Mucosa of descending colon (tissue), 3 donors: ENCODE measurements at regions of chr9 and their contacts with region 1.

Region 1: GRCh38 chr9:92716557-92716956 is 46.6 kb upstream of the IPPK start:
- DNase-seq: peak; percentile 63 to 83 (median 82)
- ATAC-seq: peak; percentile 71
- H3K4me3 ChIP-seq: no peak overlapping the region
- H3K4me1 ChIP-seq: peaks cover 9% of the 10 kb centered on the region
- CTCF ChIP-seq: peak; percentile 73

Region 2: DNA sequence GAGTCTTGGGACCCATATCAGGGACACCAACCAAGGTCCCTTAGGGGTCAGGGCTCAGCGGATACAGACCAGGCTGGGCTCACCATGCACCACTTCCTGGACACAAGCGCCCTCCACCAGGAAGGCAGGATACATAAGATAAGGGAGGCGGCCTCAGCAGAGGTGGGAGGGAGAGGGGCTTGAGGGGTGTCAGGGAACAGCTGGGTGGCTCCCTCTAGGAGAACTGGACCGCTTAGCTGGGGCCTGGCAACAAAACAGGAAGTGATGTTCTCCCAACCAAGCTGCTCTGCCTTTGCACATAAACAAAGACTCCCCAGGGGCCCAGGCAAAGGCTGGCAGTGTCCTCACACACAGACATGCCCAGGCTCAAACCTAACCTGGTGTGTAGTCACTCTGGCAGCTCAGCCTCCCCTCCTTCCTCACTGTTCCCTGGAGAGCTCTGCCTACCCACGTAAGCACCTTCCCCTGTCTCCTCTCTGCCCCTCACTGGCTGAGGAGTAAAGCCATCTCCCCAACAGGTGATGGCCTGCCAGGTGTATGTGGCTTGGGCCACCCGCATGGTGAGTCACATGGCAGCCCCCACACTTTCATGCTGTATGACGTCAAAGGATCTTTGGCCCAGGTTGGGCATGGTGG is 53.9 kb after region 1 on chr9:
- intact Hi-C with region 1: no loop called
- DNase-seq: peak in 1 of 3 donors; percentile 14
- ATAC-seq: peak; percentile 40
- H3K4me3 ChIP-seq: no peak overlapping the region
- H3K4me1 ChIP-seq: peaks cover 12% of the 10 kb centered on the region
- CTCF ChIP-seq: no peak

Region 3: DNA sequence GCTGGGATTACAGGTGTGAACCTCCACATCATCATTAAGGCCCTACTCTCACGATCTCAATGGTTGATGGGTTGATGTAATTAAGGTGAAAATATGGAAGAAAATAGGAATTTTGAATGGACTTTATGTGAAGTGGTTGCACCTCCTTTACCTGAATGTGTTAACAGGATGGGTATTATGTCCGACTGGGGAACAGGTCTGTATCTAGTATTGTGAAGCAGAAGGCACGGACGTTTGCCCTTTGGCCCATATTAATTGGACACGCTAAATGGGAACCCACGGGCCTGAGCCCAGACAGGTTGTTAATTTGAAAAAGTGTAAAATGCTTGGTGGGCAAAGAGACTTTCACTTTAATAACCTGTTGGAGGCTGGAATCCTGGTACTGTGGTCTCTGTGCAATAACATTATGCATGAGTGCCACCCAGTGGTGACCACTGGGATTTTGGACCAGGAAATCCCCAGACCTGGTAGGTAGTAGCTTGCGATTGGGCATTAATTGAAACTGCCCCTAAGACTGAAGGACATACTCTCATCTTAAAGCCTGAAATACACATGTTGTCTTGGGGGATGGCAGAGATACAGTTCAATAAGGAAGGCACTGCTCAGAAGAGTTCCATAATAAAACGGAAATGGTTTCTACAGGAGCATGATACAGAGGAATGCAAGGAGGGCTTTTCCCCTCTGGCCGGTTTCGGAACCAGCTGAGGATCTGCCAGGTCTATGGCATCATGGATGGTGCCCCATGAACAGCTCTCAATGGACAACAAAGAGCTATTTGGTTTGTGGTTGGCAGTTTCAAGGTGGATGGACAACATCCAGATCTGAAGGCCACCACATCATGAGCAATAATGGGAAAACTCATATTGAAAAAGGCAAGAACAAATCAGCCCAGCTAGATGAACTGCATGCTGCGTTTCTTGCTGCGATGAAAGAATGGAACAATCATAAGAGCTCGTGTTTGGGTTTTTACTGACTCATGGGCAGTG is 74.3 kb after region 1 on chr9:
- intact Hi-C with region 1: loop called (anchors 5 kb)
- DNase-seq: peak in 2 of 3 donors; percentile 81 to 92
- ATAC-seq: peak; percentile 96
- H3K4me3 ChIP-seq: no peak overlapping the region
- H3K4me1 ChIP-seq: no peaks in the 10 kb centered on the region
- CTCF ChIP-seq: peak; percentile 60

Region 4: GRCh38 chr9:92970467-92970923 is 253.9 kb after region 1 on chr9:
- intact Hi-C with region 1: no loop called
- DNase-seq: no peak
- ATAC-seq: no peak
- H3K4me3 ChIP-seq: no peak overlapping the region
- H3K4me1 ChIP-seq: peaks cover 4% of the 10 kb centered on the region
- CTCF ChIP-seq: no peak